ENCODE measurements at regions of chr21 and their contacts with region 1.

Region 1: DNA sequence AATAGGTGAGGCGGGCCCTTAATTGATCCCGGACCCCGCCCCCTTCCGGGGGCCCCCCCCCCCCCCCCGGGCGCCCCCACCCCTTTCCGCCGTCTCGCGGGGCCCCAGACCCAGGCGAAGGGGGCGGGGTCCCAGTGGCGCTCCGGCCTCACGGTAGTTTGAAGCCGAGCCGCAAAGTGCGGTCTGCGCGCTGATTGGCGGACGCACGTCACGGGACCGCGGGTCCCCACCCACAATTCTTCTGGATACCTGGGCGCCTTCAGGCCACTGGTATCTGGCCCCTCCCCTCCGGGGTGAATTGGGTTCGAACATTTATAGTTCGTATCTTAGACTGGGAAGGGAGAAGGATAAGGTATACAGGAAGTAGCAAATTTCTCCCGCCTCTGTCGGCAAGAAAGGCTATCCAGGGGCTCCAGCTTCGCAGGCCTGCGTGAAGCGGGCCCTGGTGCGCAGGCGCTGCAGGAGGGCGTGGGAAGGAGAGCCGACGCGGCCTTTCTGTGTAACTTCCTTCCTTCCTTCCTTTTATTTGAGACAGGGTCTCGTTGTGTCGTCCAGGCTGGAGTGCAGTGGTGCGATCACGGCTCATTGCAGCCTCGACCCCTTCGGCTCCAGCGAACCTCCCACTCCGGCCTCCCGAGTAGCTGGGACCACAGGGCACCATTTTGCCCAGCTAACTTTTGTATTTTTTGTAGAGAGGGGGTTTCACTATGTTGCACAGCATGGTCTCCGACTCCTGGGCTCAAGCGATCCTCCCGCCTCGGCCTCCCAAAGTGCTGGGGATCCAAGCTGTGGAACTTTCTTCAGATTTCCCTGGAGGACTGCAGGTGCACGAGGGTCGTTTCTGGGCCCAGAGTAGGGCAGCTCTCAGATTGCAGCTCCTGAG is 564 bp upstream of the HMGN1 start:
- DNase-seq: peak; percentile 96 to 97 (median 96)
- H3K4me3 ChIP-seq: peak overlapping the region; percentile 58 to 99
- H3K4me3 Mint-ChIP-seq: peak overlapping the region; percentile 92 to 98 (median 96)
- H3K27ac ChIP-seq: peak overlapping the region; percentile 84
- H3K27ac Mint-ChIP-seq: peak overlapping the region; percentile 98 to 99 (median 98)
- H3K4me1 ChIP-seq: peaks cover 45% of the 10 kb centered on the region
- H3K4me1 Mint-ChIP-seq: peaks cover 26 to 52% (median 33%) of the 10 kb centered on the region in 4 donors
- H3K27me3 ChIP-seq: no peaks in the 10 kb centered on the region
- H3K27me3 Mint-ChIP-seq: peaks cover 2% of the 10 kb centered on the region in 2 donors

Region 2: GRCh38 chr21:39339231-39339630 is 10.2 kb before region 1 on chr21:
- CTCF ChIA-PET with region 1: interaction called, 3 read pairs
- POLR2A ChIA-PET with region 1: interaction called, 14 read pairs
- intact Hi-C with region 1: no loop called
- DNase-seq: no peak
- H3K4me3 ChIP-seq: no peak overlapping the region
- H3K4me3 Mint-ChIP-seq: no peak overlapping the region
- H3K27ac ChIP-seq: no peak overlapping the region
- H3K27ac Mint-ChIP-seq: peak overlapping the region in 1 of 7 donors; percentile 20
- H3K4me1 ChIP-seq: no peaks in the 10 kb centered on the region
- H3K4me1 Mint-ChIP-seq: peaks cover 0 to 5% (median 2%) of the 10 kb centered on the region in 4 donors
- H3K27me3 ChIP-seq: no peaks in the 10 kb centered on the region
- H3K27me3 Mint-ChIP-seq: no peaks in the 10 kb centered on the region

Region 3: DNA sequence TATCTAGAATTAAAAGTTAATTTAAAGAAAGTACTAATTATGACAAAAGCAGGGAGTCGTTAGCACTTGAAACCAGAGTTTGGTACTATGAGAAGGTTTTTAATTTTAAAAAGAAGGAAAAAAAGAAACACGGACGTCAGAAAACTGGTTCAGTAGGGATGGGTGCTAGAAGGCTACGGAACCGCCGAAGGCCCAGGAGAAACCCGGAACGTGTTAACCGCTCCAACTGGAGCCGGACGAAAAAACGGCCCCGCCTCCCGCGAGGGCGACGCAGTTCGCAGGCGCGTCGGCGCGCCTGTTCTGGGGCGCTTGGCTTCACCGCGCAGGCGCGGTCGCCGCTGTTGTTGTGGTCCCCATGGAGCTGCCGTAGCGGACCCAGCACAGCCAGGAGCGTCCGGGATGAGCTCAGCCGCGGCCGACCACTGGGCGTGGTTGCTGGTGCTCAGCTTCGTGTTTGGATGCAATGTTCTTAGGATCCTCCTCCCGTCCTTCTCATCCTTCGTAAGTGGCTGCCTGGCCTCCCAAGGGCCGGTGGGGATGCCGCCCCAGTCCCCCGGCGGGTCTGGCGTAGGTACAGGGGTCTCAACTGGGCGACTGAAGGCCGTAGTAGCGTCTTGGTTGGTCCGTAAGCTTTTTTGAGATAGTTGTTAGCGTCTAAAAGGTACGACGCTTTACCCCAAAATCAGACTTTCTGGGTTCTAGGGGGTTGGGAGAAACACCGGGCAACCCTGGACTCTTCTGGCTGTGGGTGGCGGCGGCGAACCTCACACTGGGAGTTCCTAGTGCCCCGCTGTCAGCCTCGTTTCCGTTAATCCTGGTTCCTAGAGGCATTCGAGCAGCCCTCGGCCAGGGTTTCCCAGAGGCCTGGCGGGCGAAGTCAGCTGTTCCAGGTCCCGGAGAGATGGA is 30.8 kb after region 1 on chr21:
- CTCF ChIA-PET with region 1: interaction called, 5 read pairs
- POLR2A ChIA-PET with region 1: interaction called, 38 read pairs
- intact Hi-C with region 1: loop called (anchors 1 kb)
- DNase-seq: peak; percentile 85 to 92 (median 88)
- H3K4me3 ChIP-seq: peak overlapping the region; percentile 70 to 99
- H3K4me3 Mint-ChIP-seq: peak overlapping the region; percentile 91 to 97 (median 94)
- H3K27ac ChIP-seq: peak overlapping the region; percentile 81
- H3K27ac Mint-ChIP-seq: peak overlapping the region; percentile 91 to 97 (median 93)
- H3K4me1 ChIP-seq: peaks cover 23% of the 10 kb centered on the region
- H3K4me1 Mint-ChIP-seq: peaks cover 13 to 34% (median 26%) of the 10 kb centered on the region in 4 donors
- H3K27me3 ChIP-seq: no peaks in the 10 kb centered on the region
- H3K27me3 Mint-ChIP-seq: peaks cover under 1 to 3% of the 10 kb centered on the region in 2 donors

Measured in CD4-positive, alpha-beta memory T cell (primary cell).